ENCODE measurements at regions of chr12 and their contacts with region 1.

Region 1: DNA sequence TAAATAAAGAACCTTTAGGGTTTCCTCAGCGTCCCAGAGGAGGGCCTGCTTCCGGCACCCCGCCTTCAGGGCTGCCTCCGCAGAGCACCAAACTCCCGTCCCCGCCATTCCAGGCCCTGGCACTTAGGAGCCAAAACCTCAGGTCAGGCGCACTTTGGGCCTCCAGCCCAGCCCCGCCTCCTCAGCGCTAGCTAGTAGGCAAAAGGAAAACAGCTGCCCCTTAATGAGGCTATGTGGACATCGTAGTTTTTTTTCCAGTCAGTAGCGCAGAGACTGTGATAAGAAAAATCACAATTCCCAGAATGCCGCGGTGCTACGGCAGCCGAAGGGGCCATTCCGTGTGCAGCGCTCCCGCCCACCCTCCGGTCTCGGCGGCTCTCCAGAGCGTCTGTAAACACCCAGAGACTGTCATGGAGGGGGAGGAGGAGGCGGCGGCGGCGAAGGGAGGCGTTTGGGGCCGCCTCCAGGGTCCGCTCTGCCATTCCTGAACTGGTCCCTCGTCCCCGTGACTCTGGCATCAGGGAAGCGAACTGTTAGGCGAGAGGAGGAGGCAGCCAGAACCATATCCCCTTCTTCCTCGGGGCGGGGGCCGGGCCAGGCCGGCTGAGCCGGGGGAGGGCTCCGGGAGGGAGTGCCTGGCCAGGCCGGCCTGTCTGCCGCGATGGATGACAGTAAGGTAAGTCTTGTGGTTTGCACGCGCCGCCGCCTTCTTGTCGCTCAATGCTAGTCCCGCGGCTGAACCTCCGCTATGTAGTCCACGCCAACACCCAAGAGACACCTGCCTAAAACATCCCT is at the start of gene CREBL2:
- DNase-seq: peak; percentile 98
- H3K4me3 ChIP-seq: peak within 1 kb of the TSS; percentile 75 to 86 (median 84)
- H3K27ac ChIP-seq: peak within 1 kb of the TSS; percentile 81
- H3K4me1 ChIP-seq: peaks cover 5% of the 10 kb centered on the region
- H3K27me3 ChIP-seq: no peaks in the 10 kb centered on the region
- CTCF ChIP-seq: no peak
- POLR2A ChIP-seq: peak; percentile 20
- total RNA-seq, gene CREBL2: 14.5 and 19.4 TPM in 2 replicates

Region 2: DNA sequence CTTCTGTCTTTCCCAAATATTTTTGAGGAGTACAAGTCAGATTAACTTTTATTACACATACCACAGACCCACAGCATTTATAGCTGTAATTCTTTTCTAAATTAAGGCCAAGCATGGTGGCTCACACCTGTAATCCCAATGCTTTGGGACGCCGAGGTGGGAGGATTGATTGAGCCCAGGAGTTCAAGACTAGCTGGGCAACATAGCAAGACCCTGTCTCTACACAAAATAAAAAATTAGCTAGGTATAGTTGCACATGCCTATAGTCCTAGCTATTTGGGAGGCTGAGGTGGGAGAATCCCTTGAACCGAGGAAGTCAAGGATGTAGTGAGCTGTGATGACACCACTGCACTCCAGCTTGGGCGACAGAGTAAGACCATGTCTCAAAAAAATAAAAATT is 56.1 kb before region 1 on chr12:
- CTCF ChIA-PET with region 1: no interaction called
- POLR2A ChIA-PET with region 1: no interaction called
- dilution Hi-C with region 1: no loop called
- intact Hi-C with region 1: no loop called
- DNase-seq: no peak
- H3K4me3 ChIP-seq: no peak overlapping the region
- H3K27ac ChIP-seq: no peak overlapping the region
- H3K4me1 ChIP-seq: peaks cover 10% of the 10 kb centered on the region
- H3K27me3 ChIP-seq: no peaks in the 10 kb centered on the region
- CTCF ChIP-seq: no peak
- POLR2A ChIP-seq: no peak

Region 3: GRCh38 chr12:12648284-12648683 is 36.6 kb after region 1 on chr12:
- CTCF ChIA-PET with region 1: no interaction called
- POLR2A ChIA-PET with region 1: no interaction called
- dilution Hi-C with region 1: no loop called
- intact Hi-C with region 1: no loop called
- DNase-seq: no peak
- H3K4me3 ChIP-seq: no peak overlapping the region
- H3K27ac ChIP-seq: no peak overlapping the region
- H3K4me1 ChIP-seq: no peaks in the 10 kb centered on the region
- H3K27me3 ChIP-seq: no peaks in the 10 kb centered on the region
- CTCF ChIP-seq: no peak
- POLR2A ChIP-seq: no peak

Region 4: GRCh38 chr12:12661086-12661485 is 49.4 kb after region 1 on chr12:
- CTCF ChIA-PET with region 1: no interaction called
- POLR2A ChIA-PET with region 1: no interaction called
- dilution Hi-C with region 1: no loop called
- intact Hi-C with region 1: loop called (anchors 1 kb)
- DNase-seq: no peak
- H3K4me3 ChIP-seq: no peak overlapping the region
- H3K27ac ChIP-seq: no peak overlapping the region
- H3K4me1 ChIP-seq: no peaks in the 10 kb centered on the region
- H3K27me3 ChIP-seq: peaks cover 5 to 8% of the 10 kb centered on the region in 2 experiments
- CTCF ChIP-seq: no peak
- POLR2A ChIP-seq: no peak

Measured in endothelial cell of umbilical vein (primary cell).